HepG2 (cell line): ENCODE measurements at regions of chr2 and their contacts with region 1.

Region 1: GRCh38 chr2:117470311-117471095 is 344.0 kb upstream of the DDX18 start:
- DNase-seq: peak; percentile 69
- ATAC-seq: peak; percentile 97
- H3K4me3 ChIP-seq: no peak overlapping the region
- H3K27ac ChIP-seq: no peak overlapping the region
- H3K4me1 ChIP-seq: no peaks in the 10 kb centered on the region
- H3K27me3 ChIP-seq: no peaks in the 10 kb centered on the region
- CTCF ChIP-seq: peak; percentile 89
- EP300 ChIP-seq: no peak
- POLR2A ChIP-seq: no peak
- RAD21 ChIP-seq: peak; percentile 72

Region 2: DNA sequence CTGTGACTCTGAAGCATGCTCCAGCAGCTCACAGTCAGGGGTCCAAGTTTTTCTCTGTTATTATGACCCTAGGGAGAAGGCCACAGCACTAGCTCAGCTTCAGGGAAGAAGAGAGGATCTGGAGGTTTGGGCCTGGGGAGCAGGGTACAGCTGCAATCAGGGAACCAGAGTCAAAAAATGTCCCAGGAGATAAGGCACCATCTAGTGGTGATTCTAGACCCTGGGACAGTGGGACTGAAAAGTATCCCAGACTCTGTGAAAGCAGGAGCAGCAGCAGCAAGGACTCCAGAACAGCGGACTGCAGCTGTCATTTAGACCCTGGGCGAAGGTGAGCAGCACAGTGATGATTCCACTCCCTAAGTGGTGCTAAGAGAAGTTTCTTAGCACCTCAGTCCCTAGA is 65.6 kb after region 1 on chr2:
- CTCF ChIA-PET with region 1: interaction called, 3 read pairs
- POLR2A ChIA-PET with region 1: no interaction called
- in situ Hi-C with region 1: no loop called
- intact Hi-C with region 1: loop called (anchors 1 kb)
- DNase-seq: peak; percentile 16
- ATAC-seq: peak; percentile 93
- H3K4me3 ChIP-seq: no peak overlapping the region
- H3K27ac ChIP-seq: no peak overlapping the region
- H3K4me1 ChIP-seq: no peaks in the 10 kb centered on the region
- H3K27me3 ChIP-seq: no peaks in the 10 kb centered on the region; a peak in 1 of 5 replicates
- CTCF ChIP-seq: peak; percentile 64
- EP300 ChIP-seq: no peak
- POLR2A ChIP-seq: no peak
- RAD21 ChIP-seq: no peak

Region 3: GRCh38 chr2:117771969-117772630 is 301.6 kb after region 1 on chr2:
- CTCF ChIA-PET with region 1: interaction called, 6 read pairs
- POLR2A ChIA-PET with region 1: no interaction called
- in situ Hi-C with region 1: loop called (anchors 25 kb)
- intact Hi-C with region 1: loop called (anchors 1 kb)
- DNase-seq: peak; percentile 31
- ATAC-seq: peak; percentile 67
- H3K4me3 ChIP-seq: no peak overlapping the region
- H3K27ac ChIP-seq: no peak overlapping the region
- H3K4me1 ChIP-seq: no peaks in the 10 kb centered on the region
- H3K27me3 ChIP-seq: no peaks in the 10 kb centered on the region
- CTCF ChIP-seq: peak; percentile 57
- EP300 ChIP-seq: no peak
- POLR2A ChIP-seq: no peak
- RAD21 ChIP-seq: no peak; the same call in 1 of the 2 replicates

Region 4: DNA sequence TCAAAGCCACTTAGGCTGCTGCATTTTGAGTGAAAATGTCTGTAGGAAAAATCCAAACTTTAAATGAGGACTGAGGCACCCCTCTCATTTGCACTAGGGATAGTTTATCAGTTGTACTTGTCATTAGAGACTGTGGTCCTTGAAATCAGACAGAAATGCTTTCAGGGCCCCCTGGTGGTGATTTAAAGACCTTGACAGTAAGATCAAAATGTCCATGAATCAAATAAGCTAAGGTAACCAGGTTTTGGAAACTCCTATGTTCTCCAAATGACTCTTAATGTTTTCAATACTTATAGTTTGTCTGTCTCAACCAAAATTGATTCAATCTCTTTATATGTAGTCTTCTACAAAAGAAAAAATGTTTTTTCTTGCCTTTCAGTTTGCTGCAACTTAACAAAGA is 315.2 kb after region 1 on chr2:
- CTCF ChIA-PET with region 1: interaction called, 4 read pairs
- POLR2A ChIA-PET with region 1: no interaction called
- in situ Hi-C with region 1: no loop called
- intact Hi-C with region 1: loop called (anchors 1 kb)
- DNase-seq: peak; percentile 59
- ATAC-seq: peak; percentile 83
- H3K4me3 ChIP-seq: no peak overlapping the region
- H3K27ac ChIP-seq: no peak overlapping the region
- H3K4me1 ChIP-seq: no peaks in the 10 kb centered on the region
- H3K27me3 ChIP-seq: no peaks in the 10 kb centered on the region
- CTCF ChIP-seq: peak; percentile 73
- EP300 ChIP-seq: no peak
- POLR2A ChIP-seq: no peak
- RAD21 ChIP-seq: peak; percentile 31; the same call in 1 of the 2 replicates